ENCODE measurements at regions of chrX and their contacts with region 1.

Region 1: GRCh38 chrX:38166478-38167083 is 54.1 kb downstream of the SRPX start:
- DNase-seq: no peak
- ATAC-seq: no peak

Region 2: GRCh38 chrX:37926700-37927099 is 239.9 kb before region 1 on chrX:
- intact Hi-C with region 1: loop called (anchors 2 to 10 kb)
- DNase-seq: no peak
- ATAC-seq: peak in 1 of 2 donors; percentile 32

Region 3: DNA sequence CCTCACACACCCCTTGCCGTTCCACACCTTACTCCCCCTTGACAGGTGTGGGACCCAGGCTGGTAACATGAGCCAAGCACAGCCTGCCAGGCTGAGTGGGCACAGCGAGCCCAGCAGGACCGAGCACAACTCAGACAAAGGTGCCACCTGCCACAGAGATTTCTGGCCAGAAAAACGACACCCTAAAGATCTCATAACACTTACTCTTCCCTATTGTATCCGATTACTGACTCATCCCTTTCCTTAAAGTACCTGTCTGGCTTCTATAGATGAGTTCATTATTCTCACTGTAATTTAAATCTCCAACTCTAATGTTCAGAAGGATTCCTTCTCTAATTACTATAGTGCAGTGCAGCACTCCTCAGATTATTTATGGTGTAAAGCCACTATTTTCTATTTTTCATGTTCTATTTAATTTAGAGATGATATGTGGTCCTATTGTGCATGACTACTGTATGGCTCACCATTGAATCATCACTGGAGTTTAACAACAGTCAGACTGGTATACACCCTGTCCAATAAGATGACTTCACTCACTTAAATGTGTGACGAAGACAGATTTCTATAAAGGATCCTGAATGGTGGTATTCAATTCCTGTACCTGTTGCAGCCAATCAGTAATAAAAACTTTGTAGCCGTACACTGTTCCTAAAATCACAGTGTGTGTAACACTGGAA is 167.9 kb before region 1 on chrX:
- intact Hi-C with region 1: no loop called
- DNase-seq: no peak
- ATAC-seq: no peak